Heart left ventricle (tissue), 16 donors: ENCODE measurements at regions of chr13 and their contacts with region 1.

Region 1: GRCh38 chr13:40069173-40070044 is 413.9 kb downstream of the COG6 start:
- DNase-seq: peak; percentile 76 to 80 (median 77)
- ATAC-seq: peak; percentile 90 to 96 (median 94)
- H3K4me3 ChIP-seq: peak overlapping the region in 4 of 12 donors; percentile 15 to 38 (median 23)
- H3K27ac ChIP-seq: peak overlapping the region in 2 of 12 donors; percentile 11 to 22
- H3K4me1 ChIP-seq: peaks cover 0 to 10% (median 5%) of the 10 kb centered on the region in 12 donors
- H3K27me3 ChIP-seq: no peaks in the 10 kb centered on the region
- CTCF ChIP-seq: peak; percentile 75 to 94 (median 86)
- POLR2A ChIP-seq: no peak

Region 2: GRCh38 chr13:40115421-40115820 is 46.0 kb after region 1 on chr13:
- intact Hi-C with region 1: loop called in 1 of 10 experiments (anchors 1 kb)
- DNase-seq: no peak
- ATAC-seq: peak in 1 of 4 donors; percentile 31
- H3K4me3 ChIP-seq: no peak overlapping the region
- H3K27ac ChIP-seq: peak overlapping the region in 9 of 12 donors; percentile 4 to 54 (median 21)
- H3K4me1 ChIP-seq: peaks cover 0 to 14% (median 7%) of the 10 kb centered on the region in 12 donors
- H3K27me3 ChIP-seq: no peaks in the 10 kb centered on the region
- CTCF ChIP-seq: no peak
- POLR2A ChIP-seq: no peak

Region 3: GRCh38 chr13:40126306-40127085 is 57.1 kb after region 1 on chr13:
- intact Hi-C with region 1: no loop called
- DNase-seq: no peak
- ATAC-seq: no peak
- H3K4me3 ChIP-seq: no peak overlapping the region
- H3K27ac ChIP-seq: no peak overlapping the region
- H3K4me1 ChIP-seq: peaks cover 0 to 7% (median 0%) of the 10 kb centered on the region in 12 donors
- H3K27me3 ChIP-seq: no peaks in the 10 kb centered on the region
- CTCF ChIP-seq: no peak
- POLR2A ChIP-seq: no peak

Region 4: DNA sequence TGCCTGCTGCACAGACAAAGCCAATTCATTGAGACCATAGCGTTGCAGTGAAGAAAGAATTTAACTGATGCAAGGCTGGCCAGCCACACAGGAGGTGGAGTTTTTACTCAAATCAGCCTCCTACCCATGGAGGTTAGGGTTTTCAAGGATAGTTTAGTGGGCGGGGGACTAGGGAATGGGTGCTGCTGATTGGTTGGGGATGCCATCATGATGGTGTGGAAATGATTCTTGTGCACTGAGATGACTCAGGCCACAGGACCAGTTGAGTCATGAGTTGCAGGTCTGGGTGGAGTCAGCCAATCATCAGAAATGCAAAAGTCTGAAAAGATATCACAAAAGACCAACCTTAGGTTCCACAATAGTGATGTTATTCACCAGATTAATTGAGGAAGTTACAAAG is 237.4 kb after region 1 on chr13:
- intact Hi-C with region 1: loop called in 1 of 10 experiments (anchors 10 kb)
- DNase-seq: no peak
- ATAC-seq: no peak
- H3K4me3 ChIP-seq: no peak overlapping the region
- H3K27ac ChIP-seq: no peak overlapping the region
- H3K4me1 ChIP-seq: no peaks in the 10 kb centered on the region
- H3K27me3 ChIP-seq: no peaks in the 10 kb centered on the region
- CTCF ChIP-seq: no peak
- POLR2A ChIP-seq: no peak

Region 5: DNA sequence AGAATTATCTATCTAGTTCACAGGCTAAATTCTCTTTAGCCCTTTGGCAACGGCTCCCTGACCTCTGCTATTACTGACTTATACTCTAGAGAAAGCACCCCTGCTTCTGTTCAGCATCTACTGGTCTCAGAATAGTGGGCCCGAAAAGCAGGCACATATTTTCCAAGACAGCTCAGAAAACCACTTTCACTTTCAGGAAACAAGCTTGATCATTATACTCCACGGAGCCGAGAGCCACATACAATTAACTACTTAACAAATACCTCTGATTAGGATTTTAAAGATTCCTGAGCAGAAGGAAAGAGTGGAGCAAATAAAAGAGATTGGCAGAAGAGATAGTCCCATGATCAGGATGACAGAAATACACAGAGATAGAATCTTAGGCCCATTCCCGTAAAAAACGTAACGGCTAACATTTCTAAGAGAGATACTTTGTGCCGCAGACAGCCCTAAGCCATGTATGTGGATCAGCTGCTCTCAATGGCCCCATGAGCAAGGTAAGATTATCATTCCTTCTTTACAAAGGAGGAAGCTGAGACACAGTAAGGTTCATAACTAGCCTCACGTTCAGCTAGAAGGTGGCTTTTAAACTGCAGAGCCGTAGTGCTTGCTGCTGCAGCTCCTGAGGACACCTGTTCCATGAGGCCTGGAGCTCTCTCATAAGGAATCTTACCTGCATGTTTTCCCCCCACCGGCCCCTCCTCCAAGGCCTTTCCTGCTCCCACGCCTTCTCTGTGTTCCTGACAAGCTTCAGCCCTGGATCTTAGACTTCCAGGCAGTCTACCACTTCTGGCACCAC is 369.8 kb after region 1 on chr13:
- intact Hi-C with region 1: loop called in 1 of 10 experiments (anchors 10 kb)
- DNase-seq: no peak
- ATAC-seq: peak in 1 of 4 donors; percentile 43
- H3K4me3 ChIP-seq: peak overlapping the region in 8 of 12 donors; percentile 1 to 40 (median 22)
- H3K27ac ChIP-seq: peak overlapping the region; percentile 23 to 77 (median 70)
- H3K4me1 ChIP-seq: peaks cover 5 to 53% (median 47%) of the 10 kb centered on the region in 12 donors
- H3K27me3 ChIP-seq: no peaks in the 10 kb centered on the region
- CTCF ChIP-seq: no peak
- POLR2A ChIP-seq: no peak

Region 6: DNA sequence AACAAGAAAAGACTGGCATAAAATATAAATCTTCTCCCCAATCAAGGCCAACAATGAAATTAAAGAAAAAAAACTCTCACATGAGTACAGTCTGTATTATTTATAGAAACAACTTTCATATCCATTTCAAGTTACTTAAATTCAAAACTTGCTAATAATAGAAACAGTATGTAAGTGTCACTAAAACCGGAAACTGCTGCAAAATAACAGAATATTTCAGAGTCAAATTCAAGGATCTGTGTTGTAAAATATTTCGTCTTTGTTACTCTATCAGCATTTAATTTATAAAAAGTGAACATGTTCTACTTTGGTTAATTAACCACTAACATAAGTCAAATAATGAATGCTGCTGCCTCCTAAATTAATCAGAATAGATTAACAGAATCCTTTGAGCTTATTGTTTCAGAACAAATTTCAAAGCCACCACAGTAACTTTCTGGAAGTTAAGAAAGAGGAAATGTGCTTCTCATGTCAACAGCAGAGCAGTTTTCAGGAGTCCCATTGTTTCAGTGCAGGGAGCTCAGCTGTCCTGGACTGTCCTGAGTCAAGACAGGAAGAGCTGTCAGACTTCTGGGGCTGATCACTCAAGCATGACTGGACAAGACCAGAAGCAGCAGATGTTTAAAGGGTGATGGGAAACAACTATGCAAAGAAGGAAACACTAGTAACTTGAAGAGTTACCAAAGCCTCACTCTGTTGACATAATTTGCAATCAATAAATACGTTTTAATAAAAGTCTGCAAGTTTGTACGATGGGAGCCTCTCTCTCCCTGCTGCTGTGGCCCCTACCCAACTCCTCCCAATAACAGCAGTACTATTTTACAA is 520.1 kb after region 1 on chr13:
- intact Hi-C with region 1: loop called in 1 of 10 experiments (anchors 10 kb)
- DNase-seq: peak in 4 of 5 donors; percentile 56 to 68 (median 62)
- ATAC-seq: peak; percentile 71 to 92 (median 87)
- H3K4me3 ChIP-seq: peak overlapping the region in 2 of 12 donors; percentile 0 to 12
- H3K27ac ChIP-seq: peak overlapping the region; percentile 16 to 88 (median 66)
- H3K4me1 ChIP-seq: peaks cover 21 to 99% (median 71%) of the 10 kb centered on the region in 12 donors
- H3K27me3 ChIP-seq: no peaks in the 10 kb centered on the region
- CTCF ChIP-seq: no peak
- POLR2A ChIP-seq: no peak